Activated CD4-positive, alpha-beta T cell treated with anti-CD3 and anti-CD28 coated beads for 36 hours (primary cell): ENCODE measurements at regions of chr2 and their contacts with region 1.

Region 1: DNA sequence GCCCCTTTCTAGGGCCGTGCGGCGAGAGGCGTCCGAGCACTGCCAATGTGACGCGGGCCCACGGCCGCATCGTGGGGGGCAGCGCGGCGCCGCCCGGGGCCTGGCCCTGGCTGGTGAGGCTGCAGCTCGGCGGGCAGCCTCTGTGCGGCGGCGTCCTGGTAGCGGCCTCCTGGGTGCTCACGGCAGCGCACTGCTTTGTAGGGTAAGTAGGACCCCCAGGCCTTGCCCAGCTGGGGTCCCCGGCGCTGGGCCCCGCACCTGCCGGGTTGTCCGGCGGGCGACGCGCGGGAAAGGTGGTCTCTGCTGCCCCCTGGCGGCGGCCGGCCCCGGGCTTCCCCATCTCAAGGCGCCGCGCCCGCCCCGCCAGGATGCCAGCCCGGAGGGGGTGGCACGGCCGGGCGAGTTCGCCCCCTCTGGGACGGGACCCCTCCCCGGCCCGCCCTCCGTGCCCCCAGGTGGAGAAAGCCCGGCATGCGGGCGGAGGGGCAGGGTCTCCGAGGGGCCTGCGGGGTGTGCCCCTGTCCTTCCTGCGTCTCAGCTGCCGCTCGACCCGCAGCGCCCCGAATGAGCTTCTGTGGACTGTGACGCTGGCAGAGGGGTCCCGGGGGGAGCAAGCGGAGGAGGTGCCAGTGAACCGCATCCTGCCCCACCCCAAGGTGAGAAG is 1.9 kb downstream of the PRSS56 start:
- DNase-seq: peak; percentile 84
- ATAC-seq: peak; percentile 70
- H3K4me3 Mint-ChIP-seq: no peak overlapping the region
- H3K27ac Mint-ChIP-seq: no peak overlapping the region
- H3K4me1 Mint-ChIP-seq: peaks cover 6% of the 10 kb centered on the region
- H3K27me3 Mint-ChIP-seq: peaks cover 25% of the 10 kb centered on the region

Region 2: GRCh38 chr2:231900486-231900942 is 621.6 kb before region 1 on chr2:
- CTCF ChIA-PET with region 1: no interaction called
- POLR2A ChIA-PET with region 1: no interaction called
- intact Hi-C with region 1: loop called in 1 of 2 experiments (anchors 5 kb)
- DNase-seq: peak; percentile 83
- ATAC-seq: peak; percentile 68
- H3K4me3 Mint-ChIP-seq: no peak overlapping the region
- H3K27ac Mint-ChIP-seq: no peak overlapping the region
- H3K4me1 Mint-ChIP-seq: no peaks in the 10 kb centered on the region
- H3K27me3 Mint-ChIP-seq: no peaks in the 10 kb centered on the region

Region 3: GRCh38 chr2:232030229-232030628 is 491.9 kb before region 1 on chr2:
- CTCF ChIA-PET with region 1: no interaction called
- POLR2A ChIA-PET with region 1: no interaction called
- intact Hi-C with region 1: no loop called
- DNase-seq: no peak
- ATAC-seq: no peak
- H3K4me3 Mint-ChIP-seq: no peak overlapping the region
- H3K27ac Mint-ChIP-seq: no peak overlapping the region
- H3K4me1 Mint-ChIP-seq: peaks cover 29% of the 10 kb centered on the region
- H3K27me3 Mint-ChIP-seq: no peaks in the 10 kb centered on the region

Region 4: DNA sequence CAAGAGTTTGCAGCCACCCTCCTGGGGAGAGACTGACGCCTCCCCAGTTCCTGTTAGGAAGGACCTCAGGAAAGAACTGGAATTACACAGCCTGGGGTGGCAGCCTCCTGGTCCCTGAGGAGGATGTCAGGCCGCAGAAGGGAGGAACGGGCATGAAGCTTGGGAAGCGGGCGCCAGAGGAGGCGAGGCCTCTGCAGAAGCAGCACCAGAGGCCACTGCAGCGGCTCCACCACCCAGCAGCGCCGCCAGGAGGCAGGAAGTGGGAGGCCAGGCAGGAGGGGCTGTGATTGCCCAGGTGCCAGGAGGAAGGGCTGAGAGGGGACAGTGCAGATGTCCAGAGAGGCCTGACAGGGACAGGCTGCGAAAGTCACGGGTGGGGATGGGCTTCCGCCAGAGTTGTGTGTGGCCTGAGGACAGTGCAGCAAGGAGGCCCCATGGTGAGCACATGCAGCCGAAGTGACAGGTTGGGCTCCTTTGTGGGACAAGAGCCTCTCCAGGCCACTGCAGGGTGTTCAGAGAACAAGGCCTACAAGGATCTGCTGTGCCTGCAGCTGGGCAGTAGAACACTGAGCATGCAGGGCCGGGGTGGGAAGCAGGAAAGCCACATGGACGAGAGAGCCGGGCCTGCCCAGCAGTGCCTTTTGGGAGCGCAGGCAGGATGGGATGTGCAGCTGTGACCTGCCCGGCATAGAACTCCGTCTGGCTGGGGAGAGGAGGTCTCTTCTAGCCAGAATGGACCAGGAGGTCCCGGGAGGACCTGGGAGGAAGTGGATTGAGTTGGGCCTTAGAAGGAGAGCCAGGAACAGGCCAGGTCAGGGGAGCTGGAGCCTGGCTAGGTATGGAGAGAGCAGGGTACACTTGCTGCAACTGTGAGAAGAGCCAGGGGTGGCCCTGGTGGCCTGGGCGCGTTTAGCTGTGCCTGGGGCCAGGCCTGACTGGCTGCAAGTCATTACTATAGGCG is 182.7 kb before region 1 on chr2:
- CTCF ChIA-PET with region 1: no interaction called
- POLR2A ChIA-PET with region 1: no interaction called
- intact Hi-C with region 1: loop called (anchors 5 kb)
- DNase-seq: peak; percentile 22
- ATAC-seq: no peak
- H3K4me3 Mint-ChIP-seq: no peak overlapping the region
- H3K27ac Mint-ChIP-seq: no peak overlapping the region
- H3K4me1 Mint-ChIP-seq: peaks cover 2% of the 10 kb centered on the region
- H3K27me3 Mint-ChIP-seq: no peaks in the 10 kb centered on the region

Region 5: DNA sequence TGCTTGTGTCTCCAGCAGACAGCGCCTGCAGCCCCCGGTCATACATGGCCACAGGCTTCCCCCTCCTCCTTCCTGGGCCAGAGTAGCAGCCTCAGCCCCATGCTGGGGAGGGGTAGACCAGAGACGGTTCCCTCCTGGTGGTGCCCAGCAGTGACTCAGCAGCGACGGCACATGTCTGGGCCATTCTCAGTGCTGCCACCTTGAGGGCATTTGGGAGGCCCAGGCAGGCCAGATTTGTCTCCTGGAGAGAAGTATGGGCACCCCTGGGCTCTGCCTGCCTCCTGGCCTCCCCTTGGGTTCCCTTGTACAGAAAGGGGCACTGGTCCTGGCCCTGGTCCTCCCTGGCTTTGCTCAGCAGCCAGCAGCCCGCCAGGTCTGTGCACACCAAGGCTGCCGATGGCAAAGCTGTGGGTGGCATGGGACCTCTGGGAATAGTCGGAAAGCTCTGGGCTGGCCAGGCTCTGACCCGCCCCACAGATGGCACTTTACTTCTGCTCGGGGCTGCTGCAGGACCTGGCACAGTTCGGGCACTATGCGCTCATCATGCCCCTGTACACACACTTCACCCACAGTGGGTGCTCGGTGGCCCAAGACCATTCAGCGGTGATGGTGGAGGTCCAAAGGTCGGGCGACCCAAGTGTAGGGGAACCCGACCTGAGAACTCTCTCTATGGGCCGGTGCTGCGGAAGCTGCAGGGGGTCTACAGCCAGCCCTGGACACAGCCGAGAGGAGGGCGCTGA is 77.5 kb before region 1 on chr2:
- CTCF ChIA-PET with region 1: interaction called, 5 read pairs
- POLR2A ChIA-PET with region 1: no interaction called
- intact Hi-C with region 1: loop called (anchors 1 to 2 kb)
- DNase-seq: peak; percentile 88
- ATAC-seq: peak; percentile 82
- H3K4me3 Mint-ChIP-seq: no peak overlapping the region
- H3K27ac Mint-ChIP-seq: no peak overlapping the region
- H3K4me1 Mint-ChIP-seq: peaks cover 3% of the 10 kb centered on the region
- H3K27me3 Mint-ChIP-seq: peaks cover 2% of the 10 kb centered on the region

Region 6: DNA sequence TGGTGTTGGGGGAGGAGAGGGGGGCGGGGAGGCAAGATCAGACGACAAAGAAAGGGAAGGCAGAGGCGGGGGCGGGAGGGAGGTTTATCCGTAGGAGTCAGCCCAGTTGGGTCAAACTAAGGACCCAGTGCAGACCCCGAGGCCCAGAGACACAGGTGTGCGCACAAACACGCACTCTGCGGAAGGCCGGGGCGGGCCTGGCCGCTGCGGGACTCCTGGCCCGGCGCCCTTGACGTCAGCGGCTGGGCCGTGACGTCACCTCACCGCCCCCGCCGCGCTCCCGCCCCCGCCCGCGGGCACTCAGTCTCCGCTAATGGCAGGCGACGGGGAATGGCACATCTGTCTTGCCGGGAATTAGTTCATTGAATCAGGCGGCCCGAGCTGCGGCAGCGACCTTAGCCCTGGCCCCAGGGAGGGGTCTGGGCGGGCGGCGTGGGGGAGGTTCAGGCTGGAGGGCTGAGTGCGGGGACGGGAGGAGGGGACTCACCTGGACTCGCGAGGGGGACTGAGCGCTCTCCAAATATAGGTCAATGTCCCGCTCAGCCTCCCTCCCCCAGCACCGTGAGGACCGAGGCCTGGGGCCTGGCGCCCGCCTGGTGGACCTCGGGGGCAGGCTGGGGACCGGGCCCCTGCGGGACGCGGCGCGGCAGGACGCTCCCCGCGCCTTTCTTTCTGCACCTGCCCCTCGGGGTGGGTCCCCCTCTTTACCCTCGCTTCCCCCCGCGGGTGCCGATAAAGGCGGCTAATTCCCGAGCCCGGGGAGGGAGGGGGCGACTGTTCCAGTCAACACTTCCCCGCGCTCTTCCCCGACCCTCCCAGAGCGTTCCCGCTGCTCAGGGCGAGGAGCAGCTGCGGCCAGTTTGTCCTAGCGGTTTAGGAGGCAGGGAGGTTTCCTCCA is 18.9 kb before region 1 on chr2:
- CTCF ChIA-PET with region 1: interaction called, 7 read pairs
- POLR2A ChIA-PET with region 1: no interaction called
- intact Hi-C with region 1: loop called in 1 of 2 experiments (anchors 1 kb)
- DNase-seq: peak; percentile 66
- ATAC-seq: peak; percentile 62
- H3K4me3 Mint-ChIP-seq: peak overlapping the region; percentile 64
- H3K27ac Mint-ChIP-seq: no peak overlapping the region
- H3K4me1 Mint-ChIP-seq: peaks cover 10% of the 10 kb centered on the region
- H3K27me3 Mint-ChIP-seq: peaks cover 25% of the 10 kb centered on the region

Region 7: GRCh38 chr2:233354971-233355574 is 833.0 kb after region 1 on chr2:
- CTCF ChIA-PET with region 1: no interaction called
- POLR2A ChIA-PET with region 1: no interaction called
- intact Hi-C with region 1: no loop called
- DNase-seq: peak; percentile 40
- ATAC-seq: no peak
- H3K4me3 Mint-ChIP-seq: peak overlapping the region; percentile 83
- H3K27ac Mint-ChIP-seq: peak overlapping the region; percentile 80
- H3K4me1 Mint-ChIP-seq: peaks cover 68% of the 10 kb centered on the region
- H3K27me3 Mint-ChIP-seq: no peaks in the 10 kb centered on the region

Region 8: GRCh38 chr2:233919938-233920337 is 1397.8 kb after region 1 on chr2:
- CTCF ChIA-PET with region 1: no interaction called
- POLR2A ChIA-PET with region 1: no interaction called
- intact Hi-C with region 1: no loop called
- DNase-seq: peak; percentile 29
- ATAC-seq: peak; percentile 75
- H3K4me3 Mint-ChIP-seq: no peak overlapping the region
- H3K27ac Mint-ChIP-seq: no peak overlapping the region
- H3K4me1 Mint-ChIP-seq: peaks cover 5% of the 10 kb centered on the region
- H3K27me3 Mint-ChIP-seq: peaks cover 18% of the 10 kb centered on the region